HepG2 (cell line): ENCODE measurements at regions of chr14 and their contacts with region 1.

Region 1: DNA sequence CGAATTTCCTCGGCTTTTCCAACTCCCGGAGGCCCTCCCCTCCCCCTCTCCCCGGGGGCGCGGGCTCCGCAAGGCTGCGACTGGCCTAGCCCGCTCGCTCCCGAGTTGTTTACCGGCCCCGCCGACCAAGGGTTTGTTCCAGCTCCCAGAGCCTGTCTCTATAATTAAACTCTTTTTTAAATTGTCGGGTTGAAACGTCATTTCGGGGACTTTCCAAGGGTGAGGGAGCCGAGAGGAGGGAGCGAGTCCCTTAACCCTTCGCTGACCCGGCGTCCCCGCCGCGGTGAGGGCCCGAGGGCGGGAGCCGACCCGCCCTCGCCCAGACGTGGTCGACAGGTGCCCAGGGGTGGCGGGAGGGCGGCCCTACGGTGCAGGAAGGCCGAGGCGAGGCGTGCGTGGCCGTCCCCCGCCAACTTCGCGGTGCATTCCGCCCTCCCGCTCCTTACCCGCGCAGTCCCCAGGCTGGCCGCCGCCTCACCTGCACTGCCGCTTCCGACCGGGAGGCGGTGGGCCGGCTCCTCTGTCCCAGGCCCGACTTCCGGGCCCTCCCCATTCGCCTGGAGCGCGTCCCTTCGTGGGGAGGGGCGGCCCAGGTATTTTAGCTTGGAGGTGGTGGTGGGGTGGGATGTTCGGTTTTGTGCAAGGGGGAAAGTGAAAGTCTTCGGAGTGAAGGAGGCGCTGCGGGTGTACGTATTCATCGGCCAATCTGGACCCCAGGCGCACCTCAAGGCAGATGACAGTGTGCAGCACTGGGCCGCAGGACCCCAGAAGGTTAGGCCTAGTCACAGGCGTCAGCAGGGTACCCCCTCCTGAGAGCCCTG is 2.9 kb upstream of the ZFP36L1 start:
- DNase-seq: peak; percentile 70
- ATAC-seq: peak; percentile 86
- H3K4me3 ChIP-seq: peak overlapping the region; percentile 93 to 98 (median 94)
- H3K27ac ChIP-seq: peak overlapping the region; percentile 98
- H3K4me1 ChIP-seq: peaks cover 28% of the 10 kb centered on the region
- H3K27me3 ChIP-seq: no peaks in the 10 kb centered on the region; a peak in 1 of 5 replicates
- CTCF ChIP-seq: peak; percentile 84
- EP300 ChIP-seq: no peak
- POLR2A ChIP-seq: peak; percentile 49 to 85
- RAD21 ChIP-seq: peak; percentile 41

Region 2: GRCh38 chr14:68718023-68718995 is 77.5 kb before region 1 on chr14:
- CTCF ChIA-PET with region 1: no interaction called
- POLR2A ChIA-PET with region 1: interaction called, 41 read pairs
- in situ Hi-C with region 1: loop called (anchors 5 kb)
- intact Hi-C with region 1: no loop called
- DNase-seq: no peak
- ATAC-seq: peak; percentile 54
- H3K4me3 ChIP-seq: no peak overlapping the region
- H3K27ac ChIP-seq: no peak overlapping the region
- H3K4me1 ChIP-seq: peaks cover 65% of the 10 kb centered on the region
- H3K27me3 ChIP-seq: no peaks in the 10 kb centered on the region
- CTCF ChIP-seq: no peak
- EP300 ChIP-seq: no peak
- POLR2A ChIP-seq: no peak
- RAD21 ChIP-seq: 0 out of 2 replicates have a peak, but pooled peaks have one; percentile 19

Region 3: DNA sequence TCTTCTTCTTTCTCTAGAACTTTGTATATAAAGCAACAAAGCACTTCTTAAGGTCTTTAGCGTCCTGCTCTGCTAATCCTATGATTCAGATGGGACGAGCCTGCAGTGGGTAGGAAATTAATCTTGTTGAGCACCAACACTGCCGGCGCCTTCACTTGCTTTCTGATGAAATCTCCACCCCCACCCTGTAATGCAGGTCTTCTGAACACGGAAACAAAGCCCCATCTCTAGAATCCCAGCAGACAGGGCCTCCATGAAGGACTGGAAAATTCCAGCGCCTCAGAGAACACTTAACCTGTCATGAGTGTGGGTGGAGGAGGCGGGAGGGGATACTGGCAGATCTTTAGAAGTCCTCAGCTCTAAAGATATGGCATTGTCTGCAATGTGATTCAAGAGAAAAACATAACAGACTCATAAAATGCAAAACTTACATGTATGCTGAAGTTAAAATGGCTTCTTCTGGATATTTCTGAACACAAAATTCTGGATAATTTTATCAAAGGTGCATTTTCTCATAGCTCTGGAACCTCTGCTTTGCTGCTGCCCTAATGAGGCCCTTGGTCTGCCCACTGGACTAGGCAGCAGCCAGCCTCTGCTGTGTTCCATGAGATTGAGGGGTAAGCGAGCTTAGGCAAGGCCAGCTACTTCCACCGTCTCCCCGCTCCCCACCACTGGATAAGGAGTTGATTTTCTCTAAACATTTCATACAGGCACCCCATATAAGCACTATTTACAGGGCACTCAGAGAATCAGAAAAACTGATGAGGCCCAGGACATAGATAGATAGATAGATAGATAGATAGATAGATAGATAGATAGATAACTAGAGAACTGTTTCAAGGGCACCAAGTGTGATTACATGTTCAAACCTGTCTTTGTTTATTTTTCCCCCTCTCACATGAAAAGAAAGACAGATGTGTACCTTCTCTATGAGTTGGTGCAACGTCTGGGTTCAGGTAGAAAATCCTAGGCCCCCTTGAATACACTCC is 46.0 kb before region 1 on chr14:
- CTCF ChIA-PET with region 1: no interaction called
- POLR2A ChIA-PET with region 1: interaction called, 10 read pairs
- in situ Hi-C with region 1: no loop called
- intact Hi-C with region 1: no loop called
- DNase-seq: no peak
- ATAC-seq: no peak
- H3K4me3 ChIP-seq: no peak overlapping the region
- H3K27ac ChIP-seq: no peak overlapping the region
- H3K4me1 ChIP-seq: peaks cover 71% of the 10 kb centered on the region
- H3K27me3 ChIP-seq: no peaks in the 10 kb centered on the region
- CTCF ChIP-seq: no peak
- EP300 ChIP-seq: no peak
- POLR2A ChIP-seq: no peak
- RAD21 ChIP-seq: no peak

Region 4: GRCh38 chr14:68762953-68763764 is 32.6 kb before region 1 on chr14:
- CTCF ChIA-PET with region 1: no interaction called
- POLR2A ChIA-PET with region 1: interaction called, 16 read pairs
- in situ Hi-C with region 1: no loop called
- intact Hi-C with region 1: no loop called
- DNase-seq: peak; percentile 69
- ATAC-seq: peak; percentile 77
- H3K4me3 ChIP-seq: peak overlapping the region in 2 of 3 experiments; percentile 3 to 41; a peak in 1 of 6 replicates
- H3K27ac ChIP-seq: no peak overlapping the region
- H3K4me1 ChIP-seq: peaks cover 83% of the 10 kb centered on the region
- H3K27me3 ChIP-seq: no peaks in the 10 kb centered on the region
- CTCF ChIP-seq: no peak
- EP300 ChIP-seq: peak in 1 of 2 experiments; percentile 38; a peak in 1 of 4 replicates
- POLR2A ChIP-seq: no peak
- RAD21 ChIP-seq: no peak

Region 5: DNA sequence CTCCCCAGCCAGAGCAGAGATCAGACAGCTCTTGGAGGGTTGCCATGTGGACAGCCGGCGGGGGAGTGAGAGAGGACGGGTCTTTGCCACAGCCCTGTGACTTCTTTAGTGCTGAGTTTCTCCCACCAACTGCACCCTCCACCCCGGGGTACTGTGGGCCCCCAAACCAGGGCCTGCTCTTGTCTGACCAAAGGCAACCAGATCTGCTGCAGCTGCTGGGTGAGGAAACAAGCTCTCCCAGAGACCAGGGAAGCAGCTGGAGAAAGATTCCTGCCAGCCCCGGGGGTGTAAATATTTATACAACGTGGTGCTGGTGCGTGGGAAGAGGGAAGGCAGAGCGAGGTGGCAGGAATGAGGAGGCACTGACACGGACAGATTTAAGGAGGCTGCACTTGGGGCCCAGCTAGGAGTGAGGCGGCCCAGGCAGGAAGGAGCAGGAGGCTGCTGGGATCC is 11.4 kb after region 1 on chr14:
- CTCF ChIA-PET with region 1: no interaction called
- POLR2A ChIA-PET with region 1: interaction called, 74 read pairs
- in situ Hi-C with region 1: no loop called
- intact Hi-C with region 1: no loop called
- DNase-seq: peak; percentile 58
- ATAC-seq: peak; percentile 80
- H3K4me3 ChIP-seq: peak overlapping the region; percentile 27 to 64 (median 32)
- H3K27ac ChIP-seq: peak overlapping the region; percentile 54
- H3K4me1 ChIP-seq: peaks cover 22% of the 10 kb centered on the region
- H3K27me3 ChIP-seq: no peaks in the 10 kb centered on the region; a peak in 1 of 5 replicates
- CTCF ChIP-seq: no peak
- EP300 ChIP-seq: no peak
- POLR2A ChIP-seq: no peak
- RAD21 ChIP-seq: no peak

Region 6: DNA sequence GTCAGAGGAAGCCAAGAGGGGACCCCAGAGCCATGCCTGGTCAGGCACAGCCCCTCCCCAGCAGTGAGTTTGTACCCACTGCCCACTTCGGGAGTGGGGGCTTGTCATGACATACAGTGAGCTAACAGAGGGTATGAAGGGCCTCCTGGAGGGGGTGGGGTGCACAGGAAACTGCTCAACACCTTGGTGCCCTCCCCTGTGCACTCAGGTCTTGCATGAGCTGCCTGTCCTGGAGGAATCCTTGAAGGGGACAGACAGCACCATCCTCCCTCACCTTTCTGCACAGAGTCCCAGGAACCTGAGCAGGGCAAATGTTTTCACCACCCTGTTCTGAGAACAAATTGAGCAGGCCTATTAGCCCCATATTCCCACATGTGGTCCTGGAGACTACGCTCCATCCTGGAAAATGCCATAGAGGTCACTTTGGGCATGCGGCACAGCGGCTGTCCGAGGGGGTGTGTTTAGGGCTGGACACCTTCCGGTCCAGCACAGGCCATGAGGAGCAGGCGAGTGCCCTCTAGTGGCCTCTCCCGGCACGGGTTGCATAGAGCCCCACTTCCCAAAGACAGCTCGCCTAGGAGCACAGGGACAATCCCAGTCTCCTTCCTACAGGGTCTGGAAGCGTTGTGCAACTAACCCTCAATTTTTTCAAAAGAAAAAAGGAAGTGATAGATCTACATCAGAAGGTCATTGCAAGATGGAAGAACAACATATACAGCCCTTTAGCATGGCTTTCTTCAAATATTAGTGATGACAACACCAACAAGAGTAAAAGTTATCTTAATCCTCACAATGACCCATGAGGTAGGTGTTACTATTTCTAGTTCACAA is 28.9 kb after region 1 on chr14:
- CTCF ChIA-PET with region 1: no interaction called
- POLR2A ChIA-PET with region 1: interaction called, 57 read pairs
- in situ Hi-C with region 1: no loop called
- intact Hi-C with region 1: no loop called
- DNase-seq: peak; percentile 80
- ATAC-seq: peak; percentile 85
- H3K4me3 ChIP-seq: peak overlapping the region; percentile 13 to 67 (median 32); a peak in 5 of 6 replicates
- H3K27ac ChIP-seq: peak overlapping the region; percentile 81
- H3K4me1 ChIP-seq: peaks cover 69% of the 10 kb centered on the region
- H3K27me3 ChIP-seq: no peaks in the 10 kb centered on the region
- CTCF ChIP-seq: peak; percentile 98
- EP300 ChIP-seq: 0 out of 4 replicates have a peak, but pooled peaks have one; percentile 11 to 45
- POLR2A ChIP-seq: peak; percentile 41 to 43; a peak in 3 of 4 replicates
- RAD21 ChIP-seq: peak; percentile 88

Region 7: DNA sequence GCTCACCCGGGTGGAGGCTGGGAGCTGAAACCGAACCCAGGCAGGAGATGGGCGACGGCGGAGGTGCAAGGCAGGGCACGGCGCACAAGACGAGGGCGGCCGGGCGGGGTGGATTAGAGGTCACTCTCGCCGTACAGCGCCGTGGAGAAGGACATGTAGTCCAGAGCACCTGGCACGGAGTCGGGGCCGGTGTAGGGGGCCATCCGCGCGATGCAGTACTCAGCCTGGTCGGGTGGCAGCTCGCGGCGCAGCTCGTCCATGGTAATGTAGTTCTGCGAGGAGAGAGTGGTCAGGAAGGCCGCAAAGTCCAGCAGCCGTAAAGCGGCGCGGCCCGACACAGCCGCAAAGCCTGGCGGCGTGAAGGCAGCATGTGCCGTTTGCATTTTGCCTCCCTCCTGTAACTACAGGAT is 78.9 kb after region 1 on chr14:
- CTCF ChIA-PET with region 1: no interaction called
- POLR2A ChIA-PET with region 1: no interaction called
- in situ Hi-C with region 1: no loop called
- intact Hi-C with region 1: no loop called
- DNase-seq: no peak
- ATAC-seq: no peak
- H3K4me3 ChIP-seq: no peak overlapping the region
- H3K27ac ChIP-seq: no peak overlapping the region
- H3K4me1 ChIP-seq: peaks cover 3% of the 10 kb centered on the region
- H3K27me3 ChIP-seq: no peaks in the 10 kb centered on the region
- CTCF ChIP-seq: no peak
- EP300 ChIP-seq: no peak
- POLR2A ChIP-seq: no peak
- RAD21 ChIP-seq: no peak